PC-9 (cell line): ENCODE measurements at regions of chr3 and their contacts with region 1.

Region 1: DNA sequence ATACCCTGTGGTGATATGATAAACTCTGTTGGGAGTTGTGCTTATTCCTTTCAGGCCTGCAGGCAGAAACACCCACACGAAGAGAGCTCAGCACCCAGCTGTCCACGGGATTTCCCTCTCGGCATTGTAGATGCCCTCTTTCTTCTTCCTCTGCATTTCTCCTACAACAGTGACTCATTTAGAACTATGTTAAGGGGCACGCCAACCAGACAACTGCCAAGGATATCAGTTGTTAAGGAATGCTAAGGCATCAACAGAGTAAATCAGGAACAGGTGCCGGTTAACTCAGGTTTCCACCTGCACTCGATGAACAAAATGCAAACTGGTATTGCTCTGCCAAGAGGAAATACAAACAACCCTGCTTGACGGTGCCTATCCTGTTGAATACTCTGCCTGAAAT is 270.0 kb upstream of the PEX5L start:
- DNase-seq: peak; percentile 71 to 88
- H3K4me3 ChIP-seq: peak overlapping the region; percentile 21; the same call in 1 of the 2 replicates
- H3K27ac ChIP-seq: peak overlapping the region; percentile 27; the same call in 1 of the 2 replicates
- H3K4me1 ChIP-seq: peaks cover 18% of the 10 kb centered on the region
- H3K27me3 ChIP-seq: no peaks in the 10 kb centered on the region
- CTCF ChIP-seq: no peak

Region 2: GRCh38 chr3:179872842-179873241 is 433.8 kb before region 1 on chr3:
- CTCF ChIA-PET with region 1: no interaction called
- POLR2A ChIA-PET with region 1: no interaction called
- intact Hi-C with region 1: no loop called
- DNase-seq: no peak
- H3K4me3 ChIP-seq: no peak overlapping the region
- H3K27ac ChIP-seq: no peak overlapping the region
- H3K4me1 ChIP-seq: no peaks in the 10 kb centered on the region
- H3K27me3 ChIP-seq: no peaks in the 10 kb centered on the region
- CTCF ChIP-seq: no peak

Region 3: GRCh38 chr3:180264479-180264878 is 42.2 kb before region 1 on chr3:
- CTCF ChIA-PET with region 1: no interaction called
- POLR2A ChIA-PET with region 1: no interaction called
- intact Hi-C with region 1: loop called (anchors 1 kb)
- DNase-seq: no peak
- H3K4me3 ChIP-seq: no peak overlapping the region
- H3K27ac ChIP-seq: no peak overlapping the region
- H3K4me1 ChIP-seq: no peaks in the 10 kb centered on the region
- H3K27me3 ChIP-seq: no peaks in the 10 kb centered on the region
- CTCF ChIP-seq: no peak

Region 4: GRCh38 chr3:180295786-180296185 is 10.9 kb before region 1 on chr3:
- CTCF ChIA-PET with region 1: no interaction called
- POLR2A ChIA-PET with region 1: no interaction called
- intact Hi-C with region 1: loop called (anchors 1 kb)
- DNase-seq: peak; percentile 68 to 76
- H3K4me3 ChIP-seq: no peak overlapping the region
- H3K27ac ChIP-seq: no peak overlapping the region
- H3K4me1 ChIP-seq: peaks cover 18% of the 10 kb centered on the region
- H3K27me3 ChIP-seq: no peaks in the 10 kb centered on the region
- CTCF ChIP-seq: no peak